Activated CD4-positive, alpha-beta memory T cell treated with anti-CD3 and anti-CD28 coated beads, Interleukin-2, amount 10 ng/mL, durations not matched to agents 7 days and 5 days (primary cell): ENCODE measurements at regions of chr1 and their contacts with region 1.

Region 1: DNA sequence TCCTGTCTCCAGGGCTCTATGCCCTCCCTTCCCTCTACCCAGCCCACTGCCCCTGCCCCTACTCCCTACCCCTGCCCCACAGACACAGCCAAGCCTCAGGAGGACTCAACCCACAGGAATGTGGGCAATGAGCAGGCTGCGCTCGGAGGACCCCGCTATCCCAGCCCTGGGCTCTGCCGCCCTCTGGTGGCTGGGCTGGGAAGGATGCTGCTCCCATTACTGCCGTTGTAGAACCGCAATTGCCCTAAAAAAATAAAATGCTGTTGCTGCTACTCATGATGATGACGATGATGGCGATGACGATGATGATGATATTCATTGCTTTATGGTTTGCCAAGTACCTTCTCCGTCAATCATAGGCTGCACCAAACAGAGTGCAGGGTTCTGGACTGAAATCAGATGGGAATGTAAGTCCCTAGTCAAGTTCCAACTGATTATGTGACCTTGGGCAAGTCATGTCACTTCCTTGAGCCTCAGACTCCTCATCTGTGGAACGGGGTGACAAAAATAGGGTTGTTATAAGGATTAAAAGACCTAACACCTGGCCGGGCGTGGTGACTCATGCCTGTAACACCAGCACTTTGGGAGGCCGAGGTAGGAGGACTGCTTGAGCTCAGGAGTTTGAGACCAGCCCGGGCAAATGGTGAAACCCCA is 24.6 kb downstream of the ARHGEF19 start:
- DNase-seq: peak; percentile 78
- H3K4me3 Mint-ChIP-seq: no peak overlapping the region
- H3K27ac Mint-ChIP-seq: no peak overlapping the region
- H3K4me1 Mint-ChIP-seq: peaks cover 5% of the 10 kb centered on the region
- H3K27me3 Mint-ChIP-seq: peaks cover 14% of the 10 kb centered on the region

Region 2: GRCh38 chr1:16073490-16074119 is 114.3 kb before region 1 on chr1 and contains the start of gene FAM131C:
- CTCF ChIA-PET with region 1: interaction called, 207 read pairs
- POLR2A ChIA-PET with region 1: interaction called, 14 read pairs
- DNase-seq: peak; percentile 52
- H3K4me3 Mint-ChIP-seq: peak within 1 kb of the TSS; percentile 60
- H3K27ac Mint-ChIP-seq: no peak within 1 kb of the TSS
- H3K4me1 Mint-ChIP-seq: peaks cover 55% of the 10 kb centered on the region
- H3K27me3 Mint-ChIP-seq: peaks cover 23% of the 10 kb centered on the region
- total RNA-seq, gene FAM131C: 5.1 to 5.6 TPM

Region 3: GRCh38 chr1:16243936-16244649 is 56.2 kb after region 1 on chr1:
- CTCF ChIA-PET with region 1: interaction called, 14 read pairs
- POLR2A ChIA-PET with region 1: no interaction called
- DNase-seq: peak; percentile 81
- H3K4me3 Mint-ChIP-seq: no peak overlapping the region
- H3K27ac Mint-ChIP-seq: no peak overlapping the region
- H3K4me1 Mint-ChIP-seq: peaks cover 18% of the 10 kb centered on the region
- H3K27me3 Mint-ChIP-seq: no peaks in the 10 kb centered on the region